Naive thymus-derived CD4-positive, alpha-beta T cell (primary cell): ENCODE measurements at regions of chr16 and their contacts with region 1.

Region 1: GRCh38 chr16:30335598-30336474 is 19.3 kb downstream of the CD2BP2 start:
- DNase-seq: peak in 1 of 9 donors; percentile 26
- ATAC-seq: no peak
- H3K4me3 ChIP-seq: peak overlapping the region; percentile 50
- H3K4me3 Mint-ChIP-seq: peak overlapping the region; percentile 80 to 96 (median 87)
- H3K27ac ChIP-seq: peak overlapping the region; percentile 74
- H3K27ac Mint-ChIP-seq: peak overlapping the region; percentile 57 to 91 (median 81)
- H3K4me1 ChIP-seq: peaks cover 7% of the 10 kb centered on the region in 2 donors
- H3K4me1 Mint-ChIP-seq: peaks cover 3 to 30% (median 17%) of the 10 kb centered on the region in 7 donors
- H3K27me3 ChIP-seq: no peaks in the 10 kb centered on the region
- H3K27me3 Mint-ChIP-seq: no peaks in the 10 kb centered on the region

Region 2: GRCh38 chr16:30370444-30371247 is 34.8 kb after region 1 on chr16 and contains the start of gene TBC1D10B:
- CTCF ChIA-PET with region 1: no interaction called
- POLR2A ChIA-PET with region 1: interaction called, 13 read pairs
- intact Hi-C with region 1: loop called (anchors 2 kb)
- DNase-seq: peak; percentile 89 to 100 (median 100)
- ATAC-seq: peak; percentile 91
- H3K4me3 ChIP-seq: peak within 1 kb of the TSS; percentile 76
- H3K4me3 Mint-ChIP-seq: peak within 1 kb of the TSS; percentile 83 to 92 (median 89)
- H3K27ac ChIP-seq: peak within 1 kb of the TSS; percentile 80
- H3K27ac Mint-ChIP-seq: peak within 1 kb of the TSS; percentile 63 to 98 (median 93)
- H3K4me1 ChIP-seq: peaks cover 24 to 25% of the 10 kb centered on the region in 2 donors
- H3K4me1 Mint-ChIP-seq: peaks cover 42 to 54% (median 50%) of the 10 kb centered on the region in 7 donors
- H3K27me3 ChIP-seq: no peaks in the 10 kb centered on the region
- H3K27me3 Mint-ChIP-seq: peaks cover 0 to 3% (median 0%) of the 10 kb centered on the region in 5 donors
- total RNA-seq, gene TBC1D10B: 23.2 to 70.0 (median 45.2) TPM

Region 3: DNA sequence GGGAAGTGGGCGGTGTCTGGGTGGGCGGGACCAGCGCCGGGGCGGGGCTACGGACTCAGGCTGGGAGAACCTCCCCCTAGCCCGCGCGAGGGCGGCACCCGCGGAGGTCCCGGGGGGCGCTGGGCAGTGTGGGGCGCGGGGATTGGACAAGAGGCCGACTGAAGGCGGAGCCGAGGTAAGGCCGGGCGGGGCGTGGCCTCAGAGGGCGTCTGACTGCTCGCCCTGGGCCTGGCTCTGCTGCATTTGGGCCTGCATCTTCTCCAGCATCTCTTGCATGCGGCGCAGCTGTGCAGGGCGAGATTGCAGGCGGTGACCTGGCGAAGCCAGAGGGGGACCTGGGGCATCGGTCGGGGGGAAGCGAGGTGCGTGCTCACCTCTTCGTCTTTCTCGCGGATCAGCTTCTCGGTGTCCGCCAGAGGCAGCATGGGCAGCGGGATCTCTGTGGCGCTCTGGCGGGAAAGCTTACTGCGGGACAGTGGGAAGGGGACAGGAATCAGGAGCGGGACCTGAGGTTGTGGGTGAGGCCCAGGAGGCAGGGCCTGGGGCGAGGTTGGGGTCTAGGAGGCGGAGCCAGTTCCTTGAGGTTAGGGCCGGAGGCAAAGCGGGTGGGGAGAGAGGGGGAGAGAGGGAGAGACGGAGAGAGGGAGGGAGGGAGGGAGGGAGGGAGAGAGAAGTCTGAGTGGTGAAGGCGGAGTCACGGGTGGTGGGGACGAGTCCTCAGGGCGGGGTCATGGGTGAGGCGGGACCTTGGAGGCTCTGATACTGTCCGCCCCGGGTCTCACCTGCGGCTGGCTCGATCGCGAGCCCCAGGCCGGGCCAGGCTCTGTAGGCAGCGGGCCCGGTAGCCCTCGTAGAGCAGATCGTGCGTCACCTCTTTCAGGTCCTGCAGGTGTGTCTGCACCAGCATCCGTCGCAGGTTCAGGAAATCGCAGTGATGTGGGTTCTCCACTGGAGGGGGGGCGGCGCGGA is 42.7 kb after region 1 on chr16:
- CTCF ChIA-PET with region 1: interaction called, 6 read pairs
- POLR2A ChIA-PET with region 1: interaction called, 11 read pairs
- intact Hi-C with region 1: loop called in 1 of 2 experiments (anchors 1 kb)
- DNase-seq: peak; percentile 97 to 99 (median 99)
- ATAC-seq: peak; percentile 91
- H3K4me3 ChIP-seq: peak overlapping the region; percentile 88
- H3K4me3 Mint-ChIP-seq: peak overlapping the region; percentile 90 to 100 (median 97)
- H3K27ac ChIP-seq: peak overlapping the region; percentile 100
- H3K27ac Mint-ChIP-seq: peak overlapping the region; percentile 98 to 100 (median 100)
- H3K4me1 ChIP-seq: peaks cover 54 to 56% of the 10 kb centered on the region in 2 donors
- H3K4me1 Mint-ChIP-seq: peaks cover 32 to 61% (median 49%) of the 10 kb centered on the region in 7 donors
- H3K27me3 ChIP-seq: no peaks in the 10 kb centered on the region
- H3K27me3 Mint-ChIP-seq: no peaks in the 10 kb centered on the region